ENCODE measurements at regions of chr1 and their contacts with region 1.

Region 1: GRCh38 chr1:185156854-185157598 is at the starts of genes SWT1 and TRMT1L:
- DNase-seq: peak; percentile 98 to 99
- ATAC-seq: peak; percentile 95 to 99 (median 96)
- H3K4me3 ChIP-seq: peak within 1 kb of the TSS; percentile 71 to 95 (median 81)
- H3K27ac ChIP-seq: peak within 1 kb of the TSS; percentile 93 to 99 (median 97)
- H3K4me1 ChIP-seq: peaks cover 3 to 59% (median 39%) of the 10 kb centered on the region in 9 donors
- H3K27me3 ChIP-seq: no peaks in the 10 kb centered on the region
- CTCF ChIP-seq: no peak
- total RNA-seq, gene SWT1: 3.6 to 7.9 (median 6.2) TPM
- total RNA-seq, gene TRMT1L: 19.2 to 34.1 (median 26.7) TPM

Region 2: GRCh38 chr1:184805667-184806295 is 351.2 kb before region 1 on chr1:
- intact Hi-C with region 1: loop called in 3 of 10 experiments (anchors 5 to 10 kb)
- DNase-seq: peak; percentile 86 to 91
- ATAC-seq: peak; percentile 91 to 98 (median 95)
- H3K4me3 ChIP-seq: no peak overlapping the region
- H3K27ac ChIP-seq: peak overlapping the region in 8 of 10 donors; percentile 7 to 83 (median 41)
- H3K4me1 ChIP-seq: peaks cover 0 to 21% (median 9%) of the 10 kb centered on the region in 9 donors
- H3K27me3 ChIP-seq: no peaks in the 10 kb centered on the region
- CTCF ChIP-seq: peak; percentile 75 to 97 (median 92)

Region 3: GRCh38 chr1:184910691-184911091 is 246.3 kb before region 1 on chr1:
- intact Hi-C with region 1: no loop called
- DNase-seq: no peak
- ATAC-seq: peak in 7 of 8 donors; percentile 30 to 91 (median 54)
- H3K4me3 ChIP-seq: no peak overlapping the region
- H3K27ac ChIP-seq: peak overlapping the region in 4 of 10 donors; percentile 3 to 77 (median 37)
- H3K4me1 ChIP-seq: peaks cover 0 to 90% (median 48%) of the 10 kb centered on the region in 9 donors
- H3K27me3 ChIP-seq: no peaks in the 10 kb centered on the region
- CTCF ChIP-seq: no peak

Region 4: GRCh38 chr1:184982002-184982954 is 174.7 kb before region 1 on chr1:
- intact Hi-C with region 1: loop called in 2 of 10 experiments (anchors 10 kb)
- DNase-seq: peak; percentile 77 to 80
- ATAC-seq: peak; percentile 92 to 97 (median 96)
- H3K4me3 ChIP-seq: no peak overlapping the region
- H3K27ac ChIP-seq: peak overlapping the region in 1 of 10 donors; percentile 39
- H3K4me1 ChIP-seq: peaks cover 0 to 9% (median 0%) of the 10 kb centered on the region in 9 donors
- H3K27me3 ChIP-seq: no peaks in the 10 kb centered on the region
- CTCF ChIP-seq: peak; percentile 81 to 99 (median 95)

Region 5: DNA sequence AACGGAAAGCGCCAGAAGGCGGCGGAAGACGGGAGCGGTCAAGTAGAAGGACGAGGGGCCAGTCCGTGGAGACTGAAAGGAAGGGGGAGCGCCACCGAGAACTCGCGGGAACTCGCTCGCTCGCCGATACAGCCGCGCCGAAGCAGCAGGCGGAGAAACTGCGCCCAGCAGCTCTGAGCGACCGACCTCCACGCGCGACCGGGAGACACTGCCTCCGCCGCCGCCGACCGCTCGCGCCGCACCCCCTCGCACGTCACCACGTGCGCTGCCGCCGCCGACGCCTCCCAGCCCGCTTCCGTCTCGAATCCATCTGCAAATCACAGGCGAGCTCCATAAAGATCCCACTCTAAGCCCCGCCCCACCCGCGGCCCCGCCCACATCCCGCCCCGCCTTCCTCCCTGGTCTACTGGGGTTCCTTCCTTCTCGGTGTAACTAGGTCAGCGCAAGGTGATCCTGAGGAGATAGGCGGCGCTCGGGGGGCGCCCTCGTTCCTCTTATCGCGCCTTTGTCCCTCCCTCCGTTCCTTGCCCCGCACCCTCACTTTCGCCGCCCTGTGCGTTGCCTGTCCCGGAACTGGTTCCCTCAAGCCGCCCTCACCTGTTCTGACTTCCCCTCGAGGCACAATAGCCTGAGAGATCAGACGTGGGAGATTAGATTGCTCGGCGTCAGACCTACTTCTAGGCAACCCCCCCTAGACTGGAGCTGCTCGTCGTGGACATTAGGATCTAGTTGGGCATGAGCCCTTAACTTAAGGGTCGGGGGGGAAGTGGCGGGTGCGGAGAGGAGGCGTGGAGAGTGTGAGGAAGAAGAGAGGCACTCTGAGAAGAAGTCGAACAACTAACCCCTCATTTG is 160.2 kb after region 1 on chr1 and contains the start of gene IVNS1ABP:
- intact Hi-C with region 1: loop called in 2 of 10 experiments (anchors 10 kb)
- DNase-seq: peak; percentile 95
- ATAC-seq: peak; percentile 88 to 95 (median 91)
- H3K4me3 ChIP-seq: peak within 1 kb of the TSS; percentile 85 to 99 (median 92)
- H3K27ac ChIP-seq: peak within 1 kb of the TSS; percentile 90 to 99 (median 96)
- H3K4me1 ChIP-seq: peaks cover 3 to 49% (median 44%) of the 10 kb centered on the region in 9 donors
- H3K27me3 ChIP-seq: no peaks in the 10 kb centered on the region
- CTCF ChIP-seq: peak in 5 of 9 donors; percentile 10 to 43 (median 25)
- total RNA-seq, gene IVNS1ABP: 44.7 to 132 (median 66.7) TPM

Region 6: DNA sequence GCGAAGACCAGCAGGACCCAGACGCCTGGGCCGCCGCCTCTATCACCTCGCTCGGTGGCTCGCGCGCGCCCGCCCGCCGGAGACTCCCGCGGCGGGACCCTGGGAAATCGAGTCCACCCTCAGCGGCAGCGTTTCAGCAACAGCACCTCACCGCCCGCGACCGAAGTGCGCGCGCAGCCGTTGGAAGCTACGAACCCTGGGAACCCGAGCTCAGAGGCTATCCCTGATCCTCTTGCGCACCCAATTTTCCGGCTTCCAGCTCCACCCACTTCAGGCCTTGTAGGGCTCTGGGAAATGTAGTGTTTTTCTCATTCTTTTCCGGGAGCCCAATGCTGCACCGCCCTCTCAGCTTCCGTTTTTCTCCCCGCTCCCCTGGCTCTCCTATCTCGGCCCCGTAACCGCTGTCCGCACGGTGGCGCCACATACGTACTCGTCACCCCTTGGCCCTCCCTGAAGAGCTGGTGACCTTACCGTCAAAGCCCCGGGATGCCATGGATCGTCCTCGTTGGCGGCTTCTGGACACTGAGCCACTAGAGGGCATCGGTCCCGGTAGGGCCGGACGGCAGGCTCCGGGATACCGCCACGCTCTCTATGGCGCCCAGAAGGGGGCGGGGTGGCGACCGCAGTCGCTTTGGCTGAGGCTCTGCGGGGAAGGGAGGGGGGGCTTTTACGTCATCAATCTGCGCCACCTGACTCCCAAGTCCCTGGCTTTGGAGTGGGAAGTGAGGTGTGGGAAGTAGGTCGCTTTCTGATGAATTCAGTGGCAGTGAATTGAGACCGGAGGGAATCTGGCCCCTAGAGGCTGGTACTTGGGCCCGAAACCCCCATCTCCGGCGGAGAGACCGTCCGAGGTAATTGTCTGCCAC is 1218.3 kb after region 1 on chr1 and contains the starts of genes ODR4 and TPR:
- intact Hi-C with region 1: loop called in 1 of 10 experiments (anchors 10 kb)
- DNase-seq: peak; percentile 96 to 98
- ATAC-seq: peak; percentile 95 to 99 (median 96)
- H3K4me3 ChIP-seq: peak within 1 kb of the TSS; percentile 69 to 95 (median 76)
- H3K27ac ChIP-seq: peak within 1 kb of the TSS; percentile 91 to 98 (median 96)
- H3K4me1 ChIP-seq: peaks cover 0 to 43% (median 30%) of the 10 kb centered on the region in 9 donors
- H3K27me3 ChIP-seq: no peaks in the 10 kb centered on the region
- CTCF ChIP-seq: peak; percentile 72 to 97 (median 89)
- total RNA-seq, gene ODR4: 9.8 to 15.9 (median 11.1) TPM
- total RNA-seq, gene TPR: 51.3 to 80.4 (median 65.8) TPM